ENCODE measurements at regions of chr9 and their contacts with region 1.

Region 1: GRCh38 chr9:76393963-76394679 is at the start of gene RFK:
- DNase-seq: peak; percentile 95
- H3K4me3 ChIP-seq: peak within 1 kb of the TSS; percentile 49 to 87 (median 77)
- H3K27ac ChIP-seq: peak within 1 kb of the TSS; percentile 95
- H3K4me1 ChIP-seq: peaks cover 23% of the 10 kb centered on the region
- H3K27me3 ChIP-seq: no peaks in the 10 kb centered on the region
- CTCF ChIP-seq: peak; percentile 17 to 46
- POLR2A ChIP-seq: peak; percentile 89
- total RNA-seq, gene RFK: 32.9 and 39.7 TPM in 2 replicates

Region 2: GRCh38 chr9:76321205-76321828 is 72.8 kb before region 1 on chr9:
- CTCF ChIA-PET with region 1: interaction called, 11 read pairs
- POLR2A ChIA-PET with region 1: interaction called, 3 read pairs
- dilution Hi-C with region 1: no loop called
- intact Hi-C with region 1: loop called (anchors 1 kb)
- DNase-seq: peak; percentile 87
- H3K4me3 ChIP-seq: no peak overlapping the region
- H3K27ac ChIP-seq: peak overlapping the region; percentile 63
- H3K4me1 ChIP-seq: peaks cover 8% of the 10 kb centered on the region
- H3K27me3 ChIP-seq: no peaks in the 10 kb centered on the region
- CTCF ChIP-seq: no peak
- POLR2A ChIP-seq: no peak

Region 3: GRCh38 chr9:76374702-76375559 is 19.2 kb before region 1 on chr9:
- CTCF ChIA-PET with region 1: interaction called, 10 read pairs
- POLR2A ChIA-PET with region 1: interaction called, 5 read pairs
- dilution Hi-C with region 1: no loop called
- intact Hi-C with region 1: loop called (anchors 1 kb)
- DNase-seq: peak; percentile 96
- H3K4me3 ChIP-seq: no peak overlapping the region
- H3K27ac ChIP-seq: peak overlapping the region; percentile 73
- H3K4me1 ChIP-seq: peaks cover 20% of the 10 kb centered on the region
- H3K27me3 ChIP-seq: no peaks in the 10 kb centered on the region
- CTCF ChIP-seq: no peak
- POLR2A ChIP-seq: no peak

Region 4: GRCh38 chr9:76441551-76442322 is 47.6 kb after region 1 on chr9:
- CTCF ChIA-PET with region 1: interaction called, 7 read pairs
- POLR2A ChIA-PET with region 1: no interaction called
- dilution Hi-C with region 1: no loop called
- intact Hi-C with region 1: loop called (anchors 2 kb)
- DNase-seq: peak; percentile 77
- H3K4me3 ChIP-seq: no peak overlapping the region
- H3K27ac ChIP-seq: peak overlapping the region; percentile 53
- H3K4me1 ChIP-seq: peaks cover 8% of the 10 kb centered on the region
- H3K27me3 ChIP-seq: no peaks in the 10 kb centered on the region
- CTCF ChIP-seq: no peak
- POLR2A ChIP-seq: no peak

Region 5: DNA sequence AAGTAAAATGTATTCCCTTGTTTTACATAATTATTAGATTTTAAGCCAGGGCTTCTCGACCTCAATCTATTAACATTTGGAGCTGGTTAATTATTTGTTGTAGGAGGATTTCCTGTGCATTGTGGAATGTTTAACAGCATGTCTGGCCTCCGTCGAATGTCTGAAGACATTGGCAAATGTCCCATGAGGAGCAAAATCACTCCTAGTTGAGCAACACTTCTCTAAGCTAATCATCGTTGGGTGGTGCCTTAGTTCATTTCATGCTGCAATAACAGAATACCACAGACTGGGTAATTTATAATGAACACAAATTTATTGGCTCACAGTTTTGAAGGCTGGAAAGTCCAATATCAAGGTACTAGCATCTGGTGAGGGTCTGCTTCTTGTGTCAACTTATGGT is 769.8 kb after region 1 on chr9:
- CTCF ChIA-PET with region 1: interaction called, 3 read pairs
- POLR2A ChIA-PET with region 1: no interaction called
- dilution Hi-C with region 1: no loop called
- intact Hi-C with region 1: loop called (anchors 5 kb)
- DNase-seq: peak; percentile 64
- H3K4me3 ChIP-seq: no peak overlapping the region
- H3K27ac ChIP-seq: no peak overlapping the region
- H3K4me1 ChIP-seq: peaks cover 17% of the 10 kb centered on the region
- H3K27me3 ChIP-seq: no peaks in the 10 kb centered on the region
- CTCF ChIP-seq: no peak
- POLR2A ChIP-seq: no peak

Measured in endothelial cell of umbilical vein (primary cell).